Activated CD8-positive, alpha-beta T cell treated with anti-CD3 and anti-CD28 coated beads, Interleukin-2, amount 10 ng/mL, durations not matched to agents 7 days and 5 days (primary cell): ENCODE measurements at regions of chr12 and their contacts with region 1.

Region 1: DNA sequence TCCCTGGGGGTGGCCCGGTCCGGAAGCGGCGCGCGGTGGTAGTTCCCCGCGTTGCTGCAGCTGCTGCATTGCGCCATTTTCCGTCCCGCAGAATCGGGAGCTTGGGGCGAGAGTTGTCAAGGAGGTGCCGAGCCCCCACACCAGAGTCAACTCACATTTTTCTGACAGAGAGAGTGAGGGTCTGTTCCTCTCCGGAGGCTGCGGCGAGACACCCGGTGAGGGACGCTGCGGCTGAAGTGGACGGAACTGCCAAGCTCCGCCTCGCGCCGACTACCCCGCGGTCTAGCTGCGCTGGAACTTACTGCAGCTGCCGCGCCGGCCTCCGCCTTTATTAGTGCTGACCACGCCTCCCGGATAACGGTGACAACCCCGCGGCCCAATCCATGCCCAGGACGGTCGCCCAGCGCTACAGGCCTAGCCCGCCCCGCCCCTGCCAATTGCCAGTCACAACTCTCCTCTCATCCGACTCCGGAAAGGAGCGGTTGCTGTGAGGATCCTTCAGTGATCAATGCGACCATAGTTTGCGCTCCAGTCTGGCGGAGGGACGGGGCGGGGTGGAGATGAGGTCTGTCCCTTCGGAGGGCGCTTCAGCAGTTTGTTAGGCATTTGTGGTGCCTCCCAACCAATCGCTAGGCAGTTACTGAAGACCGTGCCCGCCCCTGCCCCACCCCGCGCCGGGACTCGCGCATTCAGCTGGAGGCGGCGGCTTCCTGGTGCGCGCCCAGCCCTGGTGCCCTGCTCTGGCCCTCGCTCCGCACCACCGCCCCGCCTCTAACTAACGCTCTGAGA is at the start of gene VAMP1:
- DNase-seq: peak; percentile 99
- ATAC-seq: peak; percentile 93
- H3K4me3 Mint-ChIP-seq: peak within 1 kb of the TSS; percentile 93
- H3K27ac Mint-ChIP-seq: peak within 1 kb of the TSS; percentile 93
- H3K4me1 Mint-ChIP-seq: peaks cover 56% of the 10 kb centered on the region
- H3K27me3 Mint-ChIP-seq: peaks cover 2% of the 10 kb centered on the region
- total RNA-seq, gene VAMP1: 46.6 to 48.9 TPM

Region 2: GRCh38 chr12:6335451-6336078 is 135.0 kb before region 1 on chr12:
- CTCF ChIA-PET with region 1: interaction called, 84 read pairs
- POLR2A ChIA-PET with region 1: interaction called, 16 read pairs
- DNase-seq: peak; percentile 93
- ATAC-seq: peak; percentile 67
- H3K4me3 Mint-ChIP-seq: no peak overlapping the region
- H3K27ac Mint-ChIP-seq: no peak overlapping the region
- H3K4me1 Mint-ChIP-seq: peaks cover 9% of the 10 kb centered on the region
- H3K27me3 Mint-ChIP-seq: no peaks in the 10 kb centered on the region

Region 3: GRCh38 chr12:6380141-6381121 is 90.1 kb before region 1 on chr12:
- CTCF ChIA-PET with region 1: no interaction called
- POLR2A ChIA-PET with region 1: no interaction called
- DNase-seq: no peak
- ATAC-seq: no peak
- H3K4me3 Mint-ChIP-seq: no peak overlapping the region
- H3K27ac Mint-ChIP-seq: no peak overlapping the region
- H3K4me1 Mint-ChIP-seq: peaks cover 28% of the 10 kb centered on the region
- H3K27me3 Mint-ChIP-seq: peaks cover 29% of the 10 kb centered on the region

Region 4: DNA sequence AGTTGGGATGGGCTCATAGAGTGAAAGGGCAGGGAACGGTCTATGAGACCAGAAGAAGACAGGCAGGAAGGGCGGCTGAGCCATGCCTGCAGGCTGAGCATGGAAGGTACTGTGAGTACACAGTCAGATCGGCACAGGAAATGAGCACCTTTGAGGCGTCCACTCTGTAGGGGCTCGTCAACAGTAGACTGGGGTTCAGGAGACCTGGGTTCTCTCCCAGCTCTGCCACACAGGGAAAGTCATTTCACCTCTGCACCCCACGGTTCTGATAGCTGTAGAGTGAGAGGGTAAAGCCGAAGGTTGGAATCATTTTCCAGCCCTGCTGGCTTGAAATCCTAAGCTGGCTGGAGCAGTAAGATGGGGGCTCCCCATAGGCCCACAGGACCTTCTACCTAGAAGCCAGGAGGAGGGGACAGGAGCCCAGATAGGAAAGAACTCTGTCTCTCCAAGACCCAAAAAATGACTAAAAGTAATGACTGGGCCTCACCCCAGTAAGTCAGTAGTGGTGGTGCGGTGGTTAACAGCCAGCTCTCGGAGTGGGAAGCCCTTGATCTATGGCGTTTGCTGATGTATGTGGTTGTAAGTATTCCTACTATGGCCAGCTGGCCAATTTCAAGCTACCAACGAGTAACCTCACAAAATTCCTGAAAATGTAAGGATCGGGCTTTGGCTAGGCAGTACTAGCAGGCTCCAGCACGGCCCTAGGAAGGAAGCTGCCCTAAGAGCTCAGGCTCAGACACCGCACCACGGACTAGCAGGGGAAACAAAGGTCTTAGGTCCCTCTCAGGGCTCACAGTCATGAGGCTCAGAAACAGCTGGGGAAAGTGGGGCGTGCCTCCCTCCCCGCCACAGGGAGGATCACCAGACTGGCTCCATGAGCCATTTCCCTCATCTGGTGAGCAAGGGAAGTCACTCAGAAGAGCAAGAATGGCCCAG is 36.1 kb before region 1 on chr12:
- CTCF ChIA-PET with region 1: interaction called, 39 read pairs
- POLR2A ChIA-PET with region 1: interaction called, 10 read pairs
- DNase-seq: peak; percentile 62
- ATAC-seq: peak; percentile 87
- H3K4me3 Mint-ChIP-seq: peak overlapping the region; percentile 50
- H3K27ac Mint-ChIP-seq: peak overlapping the region; percentile 91
- H3K4me1 Mint-ChIP-seq: peaks cover 54% of the 10 kb centered on the region
- H3K27me3 Mint-ChIP-seq: no peaks in the 10 kb centered on the region

Region 5: GRCh38 chr12:6451348-6452244 is 19.0 kb before region 1 on chr12 and contains the start of gene TAPBPL:
- CTCF ChIA-PET with region 1: interaction called, 64 read pairs
- POLR2A ChIA-PET with region 1: interaction called, 39 read pairs
- DNase-seq: peak; percentile 88
- ATAC-seq: peak; percentile 85
- H3K4me3 Mint-ChIP-seq: peak within 1 kb of the TSS; percentile 99
- H3K27ac Mint-ChIP-seq: peak within 1 kb of the TSS; percentile 99
- H3K4me1 Mint-ChIP-seq: peaks cover 78% of the 10 kb centered on the region
- H3K27me3 Mint-ChIP-seq: no peaks in the 10 kb centered on the region
- total RNA-seq, gene TAPBPL: 31.2 to 32.5 TPM

Region 6: DNA sequence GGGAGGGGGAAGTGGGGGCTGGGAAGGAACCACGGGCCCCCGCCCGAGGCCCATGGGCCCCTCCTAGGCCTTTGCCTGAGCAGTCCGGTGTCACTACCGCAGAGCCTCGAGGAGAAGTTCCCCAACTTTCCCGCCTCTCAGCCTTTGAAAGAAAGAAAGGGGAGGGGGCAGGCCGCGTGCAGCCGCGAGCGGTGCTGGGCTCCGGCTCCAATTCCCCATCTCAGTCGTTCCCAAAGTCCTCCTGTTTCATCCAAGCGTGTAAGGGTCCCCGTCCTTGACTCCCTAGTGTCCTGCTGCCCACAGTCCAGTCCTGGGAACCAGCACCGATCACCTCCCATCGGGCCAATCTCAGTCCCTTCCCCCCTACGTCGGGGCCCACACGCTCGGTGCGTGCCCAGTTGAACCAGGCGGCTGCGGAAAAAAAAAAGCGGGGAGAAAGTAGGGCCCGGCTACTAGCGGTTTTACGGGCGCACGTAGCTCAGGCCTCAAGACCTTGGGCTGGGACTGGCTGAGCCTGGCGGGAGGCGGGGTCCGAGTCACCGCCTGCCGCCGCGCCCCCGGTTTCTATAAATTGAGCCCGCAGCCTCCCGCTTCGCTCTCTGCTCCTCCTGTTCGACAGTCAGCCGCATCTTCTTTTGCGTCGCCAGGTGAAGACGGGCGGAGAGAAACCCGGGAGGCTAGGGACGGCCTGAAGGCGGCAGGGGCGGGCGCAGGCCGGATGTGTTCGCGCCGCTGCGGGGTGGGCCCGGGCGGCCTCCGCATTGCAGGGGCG is 63.5 kb after region 1 on chr12 and contains the start of gene GAPDH:
- CTCF ChIA-PET with region 1: interaction called, 40 read pairs
- POLR2A ChIA-PET with region 1: interaction called, 61 read pairs
- DNase-seq: peak; percentile 94
- ATAC-seq: peak; percentile 62
- H3K4me3 Mint-ChIP-seq: peak within 1 kb of the TSS; percentile 99
- H3K27ac Mint-ChIP-seq: peak within 1 kb of the TSS; percentile 100
- H3K4me1 Mint-ChIP-seq: peaks cover 59% of the 10 kb centered on the region
- H3K27me3 Mint-ChIP-seq: no peaks in the 10 kb centered on the region
- total RNA-seq, gene GAPDH: 6,175 to 6,471 TPM